Activated B cell treated with CpG ODN at 0.5 μM for 24 hours (primary cell): ENCODE measurements at regions of chrX and their contacts with region 1.

Region 1: GRCh38 chrX:108091266-108091877 is at the starts of genes ATG4A and PSMD10:
- DNase-seq: peak; percentile 69
- ATAC-seq: peak; percentile 95
- H3K4me3 Mint-ChIP-seq: no peak within 1 kb of the TSS
- H3K27ac Mint-ChIP-seq: no peak within 1 kb of the TSS
- H3K4me1 Mint-ChIP-seq: peaks cover 6% of the 10 kb centered on the region
- H3K27me3 Mint-ChIP-seq: no peaks in the 10 kb centered on the region
- CTCF ChIP-seq: no peak
- total RNA-seq, gene ATG4A: 8.1 and 9.9 TPM in 2 replicates
- total RNA-seq, gene PSMD10: 33.4 and 35.4 TPM in 2 replicates

Region 2: GRCh38 chrX:106611679-106612392 is 1479.5 kb before region 1 on chrX and contains the start of gene RADX:
- CTCF ChIA-PET with region 1: no interaction called
- POLR2A ChIA-PET with region 1: interaction called, 6 read pairs
- intact Hi-C with region 1: loop called (anchors 2 kb)
- DNase-seq: peak; percentile 66
- ATAC-seq: peak; percentile 96
- H3K4me3 Mint-ChIP-seq: peak within 1 kb of the TSS; percentile 93
- H3K27ac Mint-ChIP-seq: peak within 1 kb of the TSS; percentile 92
- H3K4me1 Mint-ChIP-seq: peaks cover 16% of the 10 kb centered on the region
- H3K27me3 Mint-ChIP-seq: no peaks in the 10 kb centered on the region
- CTCF ChIP-seq: no peak
- total RNA-seq, gene RADX: 8.5 and 10.9 TPM in 2 replicates

Region 3: DNA sequence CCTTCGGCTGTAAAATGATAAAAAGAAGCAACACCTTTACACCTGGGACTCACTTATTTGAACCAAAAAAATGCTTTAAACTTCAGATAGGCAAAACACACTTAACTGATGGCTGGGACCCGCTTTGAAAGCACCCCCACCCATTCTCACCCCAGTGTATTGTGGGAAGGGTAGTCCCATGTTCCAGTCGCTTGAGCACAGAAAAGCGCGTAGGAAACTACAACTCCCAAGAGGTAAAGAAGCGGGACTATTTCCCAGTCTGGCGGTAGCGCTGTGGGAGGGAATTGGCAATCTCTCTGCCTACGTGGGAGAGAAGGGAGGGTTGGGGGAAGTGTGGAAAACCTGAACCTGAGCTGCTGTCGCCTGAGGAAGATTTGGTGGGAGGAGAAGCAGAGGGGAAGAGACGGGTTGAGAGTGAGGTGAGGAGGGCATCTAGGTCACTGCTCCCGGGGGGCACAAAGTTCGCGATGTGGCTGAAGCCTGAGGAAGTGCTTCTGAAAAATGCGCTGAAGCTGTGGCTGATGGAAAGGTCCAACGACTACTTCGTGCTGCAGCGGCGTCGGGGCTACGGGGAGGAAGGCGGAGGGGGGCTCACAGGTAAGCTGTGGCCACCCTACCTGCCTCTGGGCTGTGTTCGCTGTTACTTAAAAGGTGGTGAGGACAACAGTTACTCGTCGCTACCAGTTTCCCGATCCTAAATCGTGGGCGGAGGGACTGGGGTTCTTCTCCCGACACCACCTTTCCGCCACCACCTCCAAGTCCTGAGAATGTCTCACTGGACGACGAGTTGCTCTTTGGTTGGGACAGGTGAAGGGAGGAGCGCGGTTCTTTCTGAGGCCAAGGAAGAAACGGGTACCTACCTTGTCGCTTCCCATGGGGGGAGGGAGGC is 1288.7 kb before region 1 on chrX and contains the start of gene TBC1D8B:
- CTCF ChIA-PET with region 1: no interaction called
- POLR2A ChIA-PET with region 1: no interaction called
- intact Hi-C with region 1: loop called (anchors 2 kb)
- DNase-seq: peak; percentile 15
- ATAC-seq: peak; percentile 93
- H3K4me3 Mint-ChIP-seq: peak within 1 kb of the TSS; percentile 96
- H3K27ac Mint-ChIP-seq: peak within 1 kb of the TSS; percentile 53
- H3K4me1 Mint-ChIP-seq: peaks cover 24% of the 10 kb centered on the region
- H3K27me3 Mint-ChIP-seq: peaks cover 4% of the 10 kb centered on the region
- CTCF ChIP-seq: no peak
- total RNA-seq, gene TBC1D8B: 6.5 and 8.4 TPM in 2 replicates

Region 4: DNA sequence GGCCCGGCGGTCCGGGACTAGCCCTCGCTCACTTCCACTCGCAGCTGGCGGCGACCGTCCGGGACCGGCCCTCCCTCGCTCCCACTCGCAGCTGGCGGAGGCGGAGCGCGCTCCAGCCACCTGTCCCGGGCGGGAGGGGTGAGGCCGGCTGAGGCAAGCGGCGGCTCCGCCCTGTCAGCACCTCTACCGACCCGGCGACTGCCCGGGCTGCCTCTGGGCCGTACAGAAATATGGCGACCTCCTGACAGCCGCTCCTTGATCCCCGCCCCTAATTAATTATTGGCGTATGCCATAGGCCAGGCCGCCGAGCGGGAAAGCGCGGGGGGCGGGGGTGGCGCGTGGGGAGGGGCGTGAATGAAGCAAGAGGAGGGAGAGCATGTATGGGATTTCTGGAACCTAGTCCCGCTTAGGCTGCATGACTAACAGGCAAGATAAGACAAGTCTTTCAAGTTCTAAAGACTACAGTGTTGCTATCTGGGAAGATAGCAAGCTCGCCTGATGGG is 1091.3 kb before region 1 on chrX and contains the start of gene MORC4:
- CTCF ChIA-PET with region 1: no interaction called
- POLR2A ChIA-PET with region 1: no interaction called
- intact Hi-C with region 1: loop called (anchors 1 kb)
- DNase-seq: peak; percentile 42
- ATAC-seq: peak; percentile 88
- H3K4me3 Mint-ChIP-seq: peak within 1 kb of the TSS; percentile 89
- H3K27ac Mint-ChIP-seq: no peak within 1 kb of the TSS
- H3K4me1 Mint-ChIP-seq: peaks cover 10% of the 10 kb centered on the region
- H3K27me3 Mint-ChIP-seq: no peaks in the 10 kb centered on the region
- CTCF ChIP-seq: no peak
- total RNA-seq, gene MORC4: 3.7 and 4.1 TPM in 2 replicates

Region 5: GRCh38 chrX:107118322-107119147 is 972.8 kb before region 1 on chrX and contains the start of gene RBM41:
- CTCF ChIA-PET with region 1: no interaction called
- POLR2A ChIA-PET with region 1: interaction called, 3 read pairs
- intact Hi-C with region 1: loop called (anchors 1 kb)
- DNase-seq: peak; percentile 39
- ATAC-seq: peak; percentile 99
- H3K4me3 Mint-ChIP-seq: peak within 1 kb of the TSS; percentile 100
- H3K27ac Mint-ChIP-seq: peak within 1 kb of the TSS; percentile 96
- H3K4me1 Mint-ChIP-seq: peaks cover 26% of the 10 kb centered on the region
- H3K27me3 Mint-ChIP-seq: no peaks in the 10 kb centered on the region
- CTCF ChIP-seq: no peak
- total RNA-seq, gene RBM41: 16.5 and 18.5 TPM in 2 replicates

Region 6: DNA sequence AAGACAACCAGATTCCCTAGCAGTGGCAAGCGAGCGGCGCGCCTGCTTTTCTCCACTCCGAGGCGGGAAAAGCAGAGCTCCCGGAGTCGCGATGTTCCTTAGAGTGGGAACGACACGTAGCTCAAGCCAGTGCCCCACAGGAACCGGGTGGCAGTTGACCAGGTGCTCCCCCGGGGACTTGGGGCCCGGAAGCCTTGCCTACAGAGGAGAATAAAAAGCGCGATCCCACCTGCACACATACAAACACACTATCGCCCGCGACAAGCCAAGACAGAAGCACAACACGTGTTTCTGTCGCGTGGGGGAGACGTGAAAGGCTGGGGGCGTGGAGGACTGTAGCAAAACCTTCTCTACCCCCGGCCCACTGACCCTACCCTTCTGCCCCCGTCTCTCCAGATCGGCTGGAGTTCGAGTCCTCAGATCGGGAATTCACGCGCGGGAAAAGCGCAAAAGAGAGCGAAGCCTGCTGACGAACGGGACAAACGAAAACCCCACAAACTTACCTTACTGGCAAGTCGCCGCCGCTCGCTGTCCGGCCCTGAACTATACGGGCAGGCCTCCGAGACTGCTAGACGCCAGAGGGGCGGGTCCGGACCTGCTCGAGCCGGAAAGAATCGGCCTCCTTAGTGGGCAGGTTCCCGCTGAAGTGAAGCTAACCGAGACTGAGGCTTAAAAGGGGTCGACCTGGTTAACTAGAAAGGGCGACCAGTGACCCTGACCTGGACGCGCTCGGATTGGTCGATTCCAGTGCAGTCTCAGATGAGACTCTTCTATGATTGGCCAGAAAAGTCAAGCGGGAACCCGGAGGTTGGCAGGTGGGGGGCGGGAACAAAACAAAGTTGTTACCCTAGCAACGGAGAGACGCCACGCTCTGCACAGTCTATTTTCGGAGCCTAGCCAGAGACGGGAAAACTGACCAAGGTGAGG is 885.3 kb before region 1 on chrX and contains the starts of genes DNAAF6 and NUP62CL:
- CTCF ChIA-PET with region 1: no interaction called
- POLR2A ChIA-PET with region 1: no interaction called
- intact Hi-C with region 1: loop called (anchors 1 kb)
- DNase-seq: peak; percentile 41
- ATAC-seq: peak; percentile 92
- H3K4me3 Mint-ChIP-seq: peak within 1 kb of the TSS; percentile 90
- H3K27ac Mint-ChIP-seq: peak within 1 kb of the TSS; percentile 53
- H3K4me1 Mint-ChIP-seq: peaks cover 8% of the 10 kb centered on the region
- H3K27me3 Mint-ChIP-seq: no peaks in the 10 kb centered on the region
- CTCF ChIP-seq: no peak
- total RNA-seq, gene DNAAF6: not detected in 2 replicates
- total RNA-seq, gene NUP62CL: 1.1 and 1.4 TPM in 2 replicates

Region 7: DNA sequence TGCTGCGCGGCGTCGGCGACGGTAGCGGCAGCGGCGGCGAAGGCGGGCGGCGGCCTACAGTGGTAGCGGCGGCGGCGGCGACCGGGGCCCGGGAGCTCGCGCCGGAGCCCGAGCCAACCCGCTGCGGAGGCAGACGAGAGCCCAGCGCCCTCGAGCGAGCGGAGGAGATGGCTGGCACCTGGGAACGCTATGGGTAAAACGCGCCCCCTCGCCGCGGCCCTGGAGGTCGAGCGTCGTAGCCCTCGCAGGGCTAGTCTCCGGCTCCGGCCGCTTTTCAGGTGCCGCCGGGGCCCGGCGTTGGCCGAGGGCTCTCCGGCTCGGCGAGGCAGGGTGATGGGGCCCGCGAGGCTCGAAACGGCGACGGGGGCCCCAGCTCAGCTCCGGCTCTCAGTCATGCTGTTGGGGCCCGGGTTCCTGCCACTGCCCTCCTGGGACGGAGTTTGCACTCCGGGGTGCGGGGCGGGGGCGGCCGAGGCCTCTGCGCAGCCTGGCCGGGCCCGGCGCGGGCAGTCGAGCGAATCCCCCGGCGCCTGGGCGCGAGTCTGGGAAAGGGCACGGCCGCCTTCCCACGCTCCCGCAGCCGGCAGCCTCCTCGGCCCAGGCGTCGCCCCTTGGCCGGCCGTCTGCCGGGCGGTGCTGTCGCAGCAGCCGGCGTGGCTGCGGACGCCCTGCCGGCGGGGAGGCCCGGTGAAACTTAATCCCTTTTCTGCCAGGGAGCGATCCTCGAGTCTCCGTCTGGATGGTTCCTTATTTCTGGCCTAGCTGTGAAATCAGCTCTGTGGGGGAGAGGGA is 264.9 kb before region 1 on chrX:
- CTCF ChIA-PET with region 1: no interaction called
- POLR2A ChIA-PET with region 1: no interaction called
- intact Hi-C with region 1: loop called (anchors 5 kb)
- DNase-seq: peak; percentile 25
- ATAC-seq: peak; percentile 73
- H3K4me3 Mint-ChIP-seq: peak overlapping the region; percentile 74
- H3K27ac Mint-ChIP-seq: no peak overlapping the region
- H3K4me1 Mint-ChIP-seq: peaks cover 14% of the 10 kb centered on the region
- H3K27me3 Mint-ChIP-seq: peaks cover 24% of the 10 kb centered on the region
- CTCF ChIP-seq: no peak